ENCODE measurements at regions of chr7 and their contacts with region 1.

Region 1: GRCh38 chr7:88169717-88170320 is 50.0 kb downstream of the SRI start:
- DNase-seq: no peak
- H3K4me3 ChIP-seq: no peak overlapping the region
- H3K27ac ChIP-seq: no peak overlapping the region
- H3K4me1 ChIP-seq: no peaks in the 10 kb centered on the region
- H3K27me3 ChIP-seq: no peaks in the 10 kb centered on the region
- CTCF ChIP-seq: peak in 1 of 3 experiments; percentile 45; a peak in 2 of 4 replicates
- EP300 ChIP-seq: no peak
- POLR2A ChIP-seq: no peak
- RAD21 ChIP-seq: peak; percentile 45 to 46

Region 2: DNA sequence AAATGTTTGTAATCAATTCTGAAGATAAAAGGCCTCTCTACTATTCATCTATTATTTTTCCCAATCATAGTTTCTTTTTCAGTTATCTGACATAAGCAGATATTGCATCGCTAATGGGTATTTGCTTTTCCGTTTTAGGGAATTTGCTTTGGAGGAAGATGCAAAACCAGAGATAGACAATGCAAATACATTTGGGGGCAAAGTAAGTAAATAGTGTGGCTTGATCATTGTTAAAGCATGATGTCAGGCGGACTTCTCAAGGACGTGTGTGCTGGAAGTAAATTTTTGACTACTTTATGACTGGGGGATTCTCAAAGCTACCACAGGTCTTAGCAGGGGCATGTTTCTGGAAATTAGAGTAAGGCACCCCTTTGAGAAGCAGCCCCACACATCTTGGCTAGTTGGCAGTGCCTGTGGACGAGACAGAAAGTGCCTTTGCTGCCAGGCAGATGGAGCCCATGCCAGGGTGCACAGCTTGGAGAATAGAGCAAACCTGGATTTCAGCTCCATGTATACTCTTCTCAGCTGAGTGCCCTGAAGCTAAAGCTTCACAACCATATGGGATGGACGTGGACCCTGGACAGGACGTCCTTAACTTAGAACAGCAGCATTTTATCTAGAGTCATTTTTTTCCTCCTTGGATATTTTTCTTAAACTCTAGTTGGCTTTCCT is 18.6 kb before region 1 on chr7:
- CTCF ChIA-PET with region 1: interaction called, 11 read pairs
- POLR2A ChIA-PET with region 1: no interaction called
- DNase-seq: no peak
- H3K4me3 ChIP-seq: no peak overlapping the region
- H3K27ac ChIP-seq: no peak overlapping the region; the same call in 1 of the 2 replicates
- H3K4me1 ChIP-seq: peaks cover 0 to 4% (median 1%) of the 10 kb centered on the region in 4 experiments; a peak in 2 of 7 replicates
- H3K27me3 ChIP-seq: no peaks in the 10 kb centered on the region
- CTCF ChIP-seq: no peak
- EP300 ChIP-seq: no peak
- POLR2A ChIP-seq: no peak
- RAD21 ChIP-seq: no peak

Region 3: DNA sequence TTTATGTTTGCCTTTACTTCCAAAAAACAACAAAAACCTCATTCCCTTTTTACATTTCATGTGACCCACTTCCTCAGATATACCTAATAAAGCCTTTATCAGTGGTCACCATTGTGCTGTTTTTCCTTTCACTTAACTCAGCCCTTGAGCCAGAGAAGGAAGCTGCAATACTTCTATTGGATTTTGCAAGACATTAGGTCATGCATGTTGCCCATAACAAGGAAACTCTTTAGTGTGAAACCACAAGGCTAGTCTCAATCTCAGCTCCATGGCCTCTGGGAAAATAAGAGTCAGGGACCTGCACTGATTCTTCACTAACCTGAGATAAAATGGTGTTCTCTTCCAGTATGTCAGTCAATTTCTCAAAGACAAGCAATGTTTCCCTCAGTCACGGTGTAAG is 109.1 kb after region 1 on chr7:
- CTCF ChIA-PET with region 1: no interaction called
- POLR2A ChIA-PET with region 1: no interaction called
- DNase-seq: no peak
- H3K4me3 ChIP-seq: no peak overlapping the region
- H3K27ac ChIP-seq: no peak overlapping the region
- H3K4me1 ChIP-seq: peaks cover 0 to 4% (median 0%) of the 10 kb centered on the region in 4 experiments; a peak in 1 of 7 replicates
- H3K27me3 ChIP-seq: no peaks in the 10 kb centered on the region
- CTCF ChIP-seq: no peak
- EP300 ChIP-seq: no peak
- POLR2A ChIP-seq: no peak
- RAD21 ChIP-seq: no peak